ENCODE measurements at regions of chr20 and their contacts with region 1.

Region 1: DNA sequence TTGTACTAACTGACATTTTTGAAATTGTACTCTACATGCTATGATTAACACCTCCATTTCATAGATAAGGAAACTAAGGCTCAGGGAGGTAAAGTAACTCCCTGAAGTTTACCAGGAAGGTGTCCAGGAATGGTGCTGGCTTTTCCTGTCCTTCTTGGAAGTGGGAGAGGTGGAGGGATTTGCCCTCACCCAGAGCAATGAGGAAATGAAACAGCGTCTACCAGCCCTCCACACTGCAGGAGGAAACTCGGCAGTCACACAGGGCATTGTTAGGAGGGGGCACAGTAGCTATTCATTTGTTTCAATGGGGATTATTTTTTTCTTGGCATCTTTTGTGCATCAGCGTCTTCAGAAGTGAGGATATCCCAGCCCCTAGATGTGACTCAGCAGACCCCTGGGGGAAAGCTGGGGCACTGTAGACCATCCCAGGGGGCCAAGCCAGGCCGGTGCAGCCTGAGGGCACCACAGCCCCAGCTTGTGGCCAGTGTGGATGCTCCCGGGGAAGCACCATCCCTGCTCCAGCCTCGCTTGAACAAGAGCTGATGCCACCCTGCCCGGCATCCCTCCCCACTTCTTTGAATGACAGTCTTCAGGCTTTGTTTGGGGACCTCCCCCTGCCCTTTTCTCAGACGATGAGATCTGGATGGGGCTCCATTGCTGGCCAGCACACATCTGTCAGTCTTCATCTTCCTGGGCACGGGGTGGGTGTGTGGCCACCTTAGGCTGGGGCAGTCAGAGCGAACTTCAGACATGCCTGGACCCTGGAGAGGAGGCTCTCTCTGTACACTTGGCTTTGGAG is 224.4 kb upstream of the PMEPA1 start:
- DNase-seq: no peak
- ATAC-seq: no peak

Region 2: GRCh38 chr20:57907131-57908003 is 26.8 kb before region 1 on chr20:
- intact Hi-C with region 1: loop called (anchors 2 kb)
- DNase-seq: no peak
- ATAC-seq: no peak

Measured in sciatic nerve (tissue), 2 donors.